ENCODE measurements at regions of chr9 and their contacts with region 1.

Region 1: DNA sequence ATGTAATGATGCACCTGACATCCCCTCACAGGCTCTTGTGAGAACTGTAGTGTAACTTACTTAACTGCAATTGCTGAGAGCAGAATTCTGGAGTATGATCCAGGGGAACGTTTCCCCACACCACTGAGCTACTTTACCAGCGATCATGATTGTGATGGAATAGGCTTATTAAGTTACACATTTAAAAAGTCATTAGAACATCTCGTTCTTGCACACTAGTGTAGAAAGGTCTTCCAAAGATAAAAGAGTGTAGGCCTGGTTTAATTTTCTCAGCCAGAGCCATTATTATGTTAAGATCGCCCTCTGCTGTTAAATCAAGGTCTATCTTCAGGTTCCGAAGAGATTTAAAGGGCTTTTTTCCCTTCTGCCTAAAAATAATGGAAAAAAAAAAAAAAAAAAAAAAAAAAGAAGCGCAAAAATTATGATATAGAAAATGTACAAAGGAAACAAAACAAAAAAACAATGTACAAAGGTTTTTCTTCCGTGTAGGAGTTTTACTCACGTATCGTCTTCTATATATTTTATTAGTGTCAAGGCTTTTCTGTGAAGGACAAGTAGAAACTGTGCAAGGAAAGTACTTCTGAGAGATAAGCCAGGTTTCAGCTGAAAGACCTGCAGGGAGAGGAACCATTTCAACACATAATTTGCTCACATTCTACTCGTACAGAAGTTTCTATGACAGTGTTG is 18.6 kb upstream of the MOB3B start:
- DNase-seq: no peak
- ATAC-seq: peak; percentile 95

Region 2: GRCh38 chr9:27227192-27227591 is 321.0 kb before region 1 on chr9:
- intact Hi-C with region 1: no loop called
- DNase-seq: no peak
- ATAC-seq: no peak

Region 3: DNA sequence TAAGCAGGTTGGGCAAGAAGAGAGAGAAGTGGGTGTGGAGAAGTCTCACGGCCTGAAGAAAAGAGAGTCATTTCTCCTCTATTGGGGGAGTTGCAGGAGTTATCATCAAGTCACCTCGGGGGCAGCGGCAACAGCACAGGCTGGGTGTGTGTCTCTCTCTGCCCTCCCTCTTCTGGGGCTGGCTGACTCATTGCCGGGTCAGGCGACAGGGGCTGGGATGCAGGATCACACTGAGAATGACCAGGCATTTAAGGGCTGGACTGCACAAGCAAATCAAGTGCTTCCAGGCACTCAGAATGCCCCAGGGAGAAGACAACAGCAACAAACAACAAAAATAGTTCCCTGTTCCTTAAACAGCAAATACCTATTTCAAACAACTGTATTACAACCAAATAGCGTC is 245.0 kb before region 1 on chr9:
- intact Hi-C with region 1: no loop called
- DNase-seq: no peak
- ATAC-seq: no peak

Region 4: DNA sequence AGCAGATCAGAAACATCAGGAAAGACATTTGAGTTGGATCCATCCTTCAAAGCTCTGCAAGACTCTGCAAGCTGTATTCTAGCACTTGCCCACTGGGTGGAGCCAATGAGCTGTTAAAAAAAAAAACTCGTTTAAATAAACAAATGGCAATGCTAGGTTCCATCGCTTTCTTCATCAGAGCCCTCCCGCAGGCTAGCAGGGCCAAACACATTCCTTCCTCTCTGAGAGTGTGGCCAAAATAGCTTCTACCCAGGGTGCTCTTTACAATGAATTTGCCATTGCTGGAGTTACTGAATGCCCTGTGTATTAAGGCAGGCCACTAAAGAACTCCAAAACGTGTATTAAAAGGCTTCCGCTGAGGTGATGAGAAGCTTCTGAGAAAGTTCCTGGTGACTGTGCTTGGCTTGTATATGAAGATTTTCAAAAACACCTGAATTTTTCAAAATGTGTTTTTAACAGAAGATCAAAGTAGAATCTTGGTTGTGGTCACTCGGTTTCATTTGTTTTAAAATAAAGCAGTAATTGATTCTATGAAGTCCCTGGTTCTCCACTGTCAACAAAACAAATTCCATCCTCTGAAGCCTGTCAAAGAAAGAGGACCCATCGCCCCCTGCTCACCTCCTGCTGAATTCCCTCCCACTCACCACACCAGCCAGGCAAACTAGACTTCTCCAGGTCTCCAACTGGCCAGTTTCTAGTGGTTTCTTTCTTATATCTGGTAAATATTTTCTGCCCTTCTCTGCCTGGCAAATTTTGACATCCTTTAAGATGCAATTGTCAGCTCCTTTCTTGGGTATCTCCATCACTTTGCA is 214.8 kb before region 1 on chr9:
- intact Hi-C with region 1: loop called (anchors 5 kb)
- DNase-seq: peak; percentile 60
- ATAC-seq: peak; percentile 96

Region 5: DNA sequence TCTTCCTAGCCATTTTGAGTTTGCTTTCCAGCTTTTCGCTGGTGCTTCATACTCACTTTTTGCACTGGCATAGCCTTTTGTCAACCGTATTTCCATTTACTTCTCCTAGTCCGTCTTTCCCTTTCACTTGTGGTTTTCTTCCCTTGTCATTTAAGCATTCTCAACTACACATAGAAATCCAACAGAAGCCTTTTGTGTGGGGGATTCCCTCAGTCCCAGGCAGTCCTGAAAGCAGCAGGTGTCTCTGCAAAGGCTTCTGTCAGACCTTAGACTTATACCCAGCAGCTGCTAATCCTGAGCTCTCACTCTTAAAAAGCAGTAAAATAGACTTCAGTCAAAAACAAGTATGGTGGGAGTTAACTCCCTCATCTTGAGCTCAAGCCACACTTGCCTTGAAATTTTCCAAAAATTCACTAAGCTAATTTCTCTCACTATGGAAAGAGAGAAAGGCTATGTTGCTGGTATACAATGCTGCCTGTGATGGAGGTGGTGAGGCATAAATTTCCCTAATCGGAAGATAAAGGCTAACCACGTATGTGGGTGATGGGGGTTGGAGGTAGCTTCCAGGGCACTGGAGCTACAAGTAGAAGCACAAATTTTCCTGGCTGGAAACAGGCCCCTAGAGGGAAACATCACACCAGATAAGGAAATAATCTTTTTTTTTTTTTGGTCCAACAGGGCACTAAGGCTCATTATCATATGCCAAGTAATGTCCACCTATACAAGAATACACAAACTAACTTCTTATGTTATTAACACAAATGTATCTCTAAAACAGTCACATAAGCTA is 58.9 kb before region 1 on chr9:
- intact Hi-C with region 1: loop called (anchors 10 kb)
- DNase-seq: no peak
- ATAC-seq: no peak

Measured in Right ventricle myocardium superior (tissue), 1 donor.